Heart left ventricle (tissue), 16 donors: ENCODE measurements at regions of chr10 and their contacts with region 1.

Region 1: GRCh38 chr10:33008499-33009243 is 50.6 kb upstream of the ITGB1 start:
- DNase-seq: peak in 2 of 5 donors; percentile 63 to 64
- ATAC-seq: peak in 3 of 4 donors; percentile 37 to 41 (median 38)
- H3K4me3 ChIP-seq: no peak overlapping the region
- H3K27ac ChIP-seq: peak overlapping the region in 2 of 12 donors; percentile 30 to 53
- H3K4me1 ChIP-seq: peaks cover 0 to 54% (median 10%) of the 10 kb centered on the region in 12 donors
- H3K27me3 ChIP-seq: no peaks in the 10 kb centered on the region
- CTCF ChIP-seq: peak; percentile 96 to 100 (median 99)
- POLR2A ChIP-seq: no peak

Region 2: DNA sequence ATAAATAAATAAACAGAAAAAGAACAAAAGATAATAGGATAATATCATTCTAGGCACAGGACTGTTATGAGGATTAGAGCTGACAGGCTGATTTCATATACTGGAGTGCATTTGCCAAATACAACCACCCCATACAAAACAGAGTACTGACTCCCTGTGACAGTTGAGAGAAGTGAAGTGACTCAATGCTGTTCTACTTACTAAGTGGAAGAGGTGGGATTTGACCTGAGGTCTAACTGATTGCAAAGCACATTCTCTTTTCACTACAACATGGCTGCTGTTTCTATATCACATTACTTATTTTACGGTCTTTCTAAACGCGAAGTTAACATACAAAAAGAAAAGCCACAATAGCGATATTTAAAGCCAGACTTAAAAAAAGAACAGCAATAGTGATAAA is 102.1 kb before region 1 on chr10:
- intact Hi-C with region 1: loop called in 1 of 10 experiments (anchors 10 kb)
- DNase-seq: no peak
- ATAC-seq: no peak
- H3K4me3 ChIP-seq: no peak overlapping the region
- H3K27ac ChIP-seq: no peak overlapping the region
- H3K4me1 ChIP-seq: peaks cover 0 to 13% (median 2%) of the 10 kb centered on the region in 12 donors
- H3K27me3 ChIP-seq: no peaks in the 10 kb centered on the region
- CTCF ChIP-seq: no peak
- POLR2A ChIP-seq: no peak

Region 3: GRCh38 chr10:32938554-32939061 is 70.1 kb before region 1 on chr10:
- intact Hi-C with region 1: loop called in 1 of 10 experiments (anchors 5 kb)
- DNase-seq: peak in 4 of 5 donors; percentile 34 to 61 (median 42)
- ATAC-seq: peak; percentile 35 to 62 (median 58)
- H3K4me3 ChIP-seq: peak overlapping the region in 10 of 12 donors; percentile 11 to 40 (median 20)
- H3K27ac ChIP-seq: peak overlapping the region; percentile 3 to 87 (median 72)
- H3K4me1 ChIP-seq: peaks cover 7 to 87% (median 69%) of the 10 kb centered on the region in 12 donors
- H3K27me3 ChIP-seq: no peaks in the 10 kb centered on the region
- CTCF ChIP-seq: no peak
- POLR2A ChIP-seq: no peak

Region 4: GRCh38 chr10:32980558-32981468 is 27.9 kb before region 1 on chr10:
- intact Hi-C with region 1: loop called in 1 of 10 experiments (anchors 2 kb)
- DNase-seq: peak; percentile 87 to 95 (median 93)
- ATAC-seq: peak; percentile 93 to 98 (median 96)
- H3K4me3 ChIP-seq: peak overlapping the region; percentile 15 to 64 (median 58)
- H3K27ac ChIP-seq: peak overlapping the region; percentile 87 to 96 (median 92)
- H3K4me1 ChIP-seq: peaks cover 7 to 63% (median 28%) of the 10 kb centered on the region in 12 donors
- H3K27me3 ChIP-seq: no peaks in the 10 kb centered on the region
- CTCF ChIP-seq: peak in 1 of 12 donors; percentile 2
- POLR2A ChIP-seq: peak in 1 of 2 donors; percentile 72

Region 5: DNA sequence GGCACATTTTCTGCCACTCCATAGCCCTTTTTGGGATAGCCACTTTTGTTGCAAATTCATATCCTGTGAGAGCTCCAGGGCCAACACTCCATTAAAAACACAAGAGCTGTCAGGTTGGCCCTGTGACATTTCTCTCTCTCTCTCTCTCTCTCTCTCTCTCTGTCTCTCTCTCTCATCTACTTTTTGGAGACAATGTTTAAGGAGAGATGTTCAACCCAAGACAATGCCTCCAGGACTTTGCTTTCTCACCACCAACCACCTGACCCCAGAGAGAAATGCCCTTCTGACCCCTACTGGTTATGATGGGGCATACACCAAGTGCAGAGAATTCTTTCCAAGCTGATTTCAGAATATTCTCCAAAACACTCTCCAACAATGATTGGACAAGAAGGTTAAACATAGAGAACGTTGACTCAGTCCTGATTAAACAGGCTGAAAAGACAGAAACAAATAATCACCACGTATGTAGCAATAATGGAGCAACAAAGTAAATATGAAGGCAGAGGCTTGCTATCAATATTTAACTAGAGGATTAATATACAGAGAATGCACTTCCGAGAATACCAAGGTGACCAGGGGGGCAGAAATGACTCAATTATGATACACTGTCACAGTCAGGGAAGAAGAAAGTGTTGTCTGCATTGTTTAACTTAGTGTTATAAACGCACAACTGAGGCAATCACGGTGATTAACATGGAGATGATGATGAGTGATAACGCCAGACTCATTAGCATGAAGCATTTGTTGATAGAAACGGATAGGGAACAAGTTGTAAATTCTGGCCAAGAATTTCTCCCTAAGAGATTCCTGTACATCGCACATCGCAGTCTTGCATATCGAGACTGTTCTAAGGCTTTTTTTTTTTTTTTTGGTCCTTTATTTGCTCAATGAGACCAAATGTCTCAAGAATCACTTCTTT is 147.3 kb after region 1 on chr10:
- intact Hi-C with region 1: loop called in 4 of 10 experiments (anchors 5 to 10 kb)
- DNase-seq: no peak
- ATAC-seq: peak in 1 of 4 donors; percentile 53
- H3K4me3 ChIP-seq: no peak overlapping the region
- H3K27ac ChIP-seq: peak overlapping the region in 6 of 12 donors; percentile 29 to 88 (median 70)
- H3K4me1 ChIP-seq: peaks cover 0 to 54% (median 15%) of the 10 kb centered on the region in 12 donors
- H3K27me3 ChIP-seq: no peaks in the 10 kb centered on the region
- CTCF ChIP-seq: peak; percentile 22 to 54 (median 42)
- POLR2A ChIP-seq: no peak